Activated T-helper 1 cell treated with anti-CD3 and anti-CD28 coated beads, Interleukin-12 subunit alpha, Interleukin-12 subunit beta, Interleukin-2, Interleukin-4 antibody, amounts not matched to agents 30 ng/mL and 10 ng/mL and 1 ng/mL, durations not matched to agents 14 hours and 24 hours and 36 hours (primary cell): ENCODE measurements at regions of chr3 and their contacts with region 1.

Region 1: GRCh38 chr3:163490119-163490518 is 1588.2 kb downstream of the SI start:
- DNase-seq: no peak
- H3K4me3 Mint-ChIP-seq: no peak overlapping the region
- H3K27ac Mint-ChIP-seq: no peak overlapping the region
- H3K4me1 Mint-ChIP-seq: no peaks in the 10 kb centered on the region
- H3K27me3 Mint-ChIP-seq: no peaks in the 10 kb centered on the region

Region 2: DNA sequence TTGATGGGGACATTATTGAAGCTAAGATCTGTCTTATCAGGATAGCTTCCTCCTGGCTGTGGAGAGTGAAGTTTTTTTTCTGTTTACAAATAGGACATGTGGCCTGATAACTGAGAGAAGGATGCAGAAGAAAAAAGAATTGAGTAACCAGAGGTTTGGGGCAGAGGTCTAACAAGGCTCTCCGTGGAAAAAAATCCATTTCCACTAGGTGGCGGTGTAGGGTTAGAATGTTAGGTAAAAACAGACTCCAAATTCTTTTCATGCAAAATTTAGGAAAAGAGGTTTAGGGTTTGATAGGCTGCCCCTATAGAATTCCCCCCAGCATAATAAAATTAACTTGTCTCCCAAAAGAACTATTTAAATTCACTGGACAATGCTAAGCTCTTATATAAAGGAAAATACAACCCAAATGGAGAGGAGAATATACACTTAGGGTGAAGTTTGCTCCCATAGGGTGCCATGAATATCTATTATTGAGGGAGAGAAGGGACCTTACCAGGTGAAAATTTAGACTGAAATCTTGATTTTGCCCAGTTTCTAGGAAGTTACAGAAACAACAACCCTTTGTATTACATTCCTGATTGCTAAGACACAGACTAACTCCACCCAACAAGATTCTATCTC is 433.1 kb before region 1 on chr3:
- intact Hi-C with region 1: loop called (anchors 5 kb)
- DNase-seq: no peak
- H3K4me3 Mint-ChIP-seq: no peak overlapping the region
- H3K27ac Mint-ChIP-seq: no peak overlapping the region
- H3K4me1 Mint-ChIP-seq: no peaks in the 10 kb centered on the region
- H3K27me3 Mint-ChIP-seq: no peaks in the 10 kb centered on the region

Region 3: DNA sequence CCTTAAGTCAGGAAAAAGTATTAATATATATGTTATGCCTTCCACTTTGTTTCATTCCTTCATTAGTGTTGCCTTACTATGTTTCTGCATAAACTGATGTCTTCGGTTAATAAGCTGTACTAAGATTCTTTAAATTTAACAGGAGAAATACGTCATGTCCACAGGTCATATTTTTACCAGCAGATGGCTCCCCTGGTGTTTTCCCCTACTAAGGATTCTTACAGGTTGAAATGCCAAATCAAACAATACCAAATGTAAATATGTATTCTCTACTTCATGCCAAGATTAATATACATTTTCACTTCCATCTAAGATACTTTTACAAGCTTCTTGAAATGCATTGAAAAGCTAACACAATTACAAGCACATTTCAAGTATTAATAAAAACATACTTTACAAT is 13.9 kb before region 1 on chr3:
- intact Hi-C with region 1: no loop called
- DNase-seq: no peak
- H3K4me3 Mint-ChIP-seq: no peak overlapping the region
- H3K27ac Mint-ChIP-seq: no peak overlapping the region
- H3K4me1 Mint-ChIP-seq: no peaks in the 10 kb centered on the region
- H3K27me3 Mint-ChIP-seq: no peaks in the 10 kb centered on the region

Region 4: GRCh38 chr3:163622384-163622783 is 132.3 kb after region 1 on chr3:
- intact Hi-C with region 1: no loop called
- DNase-seq: no peak
- H3K4me3 Mint-ChIP-seq: no peak overlapping the region
- H3K27ac Mint-ChIP-seq: no peak overlapping the region
- H3K4me1 Mint-ChIP-seq: no peaks in the 10 kb centered on the region
- H3K27me3 Mint-ChIP-seq: no peaks in the 10 kb centered on the region

Region 5: GRCh38 chr3:163632722-163633121 is 142.6 kb after region 1 on chr3:
- intact Hi-C with region 1: no loop called
- DNase-seq: no peak
- H3K4me3 Mint-ChIP-seq: no peak overlapping the region
- H3K27ac Mint-ChIP-seq: no peak overlapping the region
- H3K4me1 Mint-ChIP-seq: no peaks in the 10 kb centered on the region
- H3K27me3 Mint-ChIP-seq: no peaks in the 10 kb centered on the region